ENCODE measurements at regions of chr7 and their contacts with region 1.

Region 1: DNA sequence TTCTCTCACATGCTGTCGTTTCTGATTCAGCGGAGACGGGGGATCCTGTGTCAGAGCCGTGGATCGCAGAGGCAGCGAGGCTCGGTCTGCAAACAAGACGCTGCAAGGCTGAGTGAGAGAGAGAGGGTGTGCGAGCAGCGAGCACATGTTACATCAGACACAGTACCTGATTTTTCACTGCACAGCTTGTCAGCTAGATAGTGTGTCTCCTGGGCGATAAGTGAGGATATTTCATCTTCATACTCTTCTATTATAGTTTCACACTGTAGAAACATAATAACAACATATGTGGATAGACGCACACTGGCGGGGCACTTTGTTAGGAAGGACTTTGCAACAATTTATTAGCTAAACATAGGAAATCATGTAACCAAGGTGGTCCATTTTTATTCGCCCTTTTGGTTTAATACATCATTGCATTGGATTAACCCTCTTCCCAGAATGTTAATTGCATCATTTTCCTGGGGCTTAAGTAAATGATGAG is 39.5 kb downstream of the CNPY1 start:
- DNase-seq: peak; percentile 45
- ATAC-seq: no peak
- H3K4me3 Mint-ChIP-seq: no peak overlapping the region
- H3K27ac Mint-ChIP-seq: no peak overlapping the region
- H3K4me1 Mint-ChIP-seq: peaks cover 19% of the 10 kb centered on the region
- H3K27me3 Mint-ChIP-seq: peaks cover 75% of the 10 kb centered on the region
- CTCF ChIP-seq: no peak

Region 2: DNA sequence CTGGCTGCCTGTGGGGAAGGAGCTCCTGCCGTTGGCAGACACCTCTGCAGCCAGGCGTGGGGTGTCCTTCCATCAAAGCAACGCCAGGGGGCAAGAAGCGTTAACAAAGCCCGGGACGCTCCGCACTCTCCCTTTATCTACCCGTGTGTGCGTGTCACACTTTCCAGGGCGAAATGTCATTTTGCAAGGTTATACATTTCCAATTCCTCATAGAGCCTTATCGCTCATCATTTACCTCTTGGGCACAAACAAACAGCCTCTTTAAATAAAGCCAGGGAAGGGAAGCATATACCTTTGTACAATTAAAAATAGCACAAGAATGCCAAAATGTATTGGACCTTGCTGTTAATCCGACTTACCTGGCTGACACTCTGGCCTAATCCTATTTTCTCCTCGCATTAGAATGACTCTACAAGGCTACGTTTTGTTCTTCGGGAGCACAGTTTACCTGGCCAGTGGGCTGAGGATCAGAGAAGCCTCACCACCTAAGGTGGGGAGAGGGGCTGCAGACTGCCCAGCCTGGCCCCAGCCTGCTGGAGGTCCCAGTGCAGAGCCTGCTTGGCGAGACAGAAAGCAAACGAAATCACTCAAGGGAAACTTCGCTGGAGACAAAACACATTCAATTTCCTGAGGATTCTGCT is 126.6 kb before region 1 on chr7:
- CTCF ChIA-PET with region 1: interaction called, 4 read pairs
- POLR2A ChIA-PET with region 1: no interaction called
- intact Hi-C with region 1: loop called (anchors 2 kb)
- DNase-seq: peak; percentile 87
- ATAC-seq: peak; percentile 96
- H3K4me3 Mint-ChIP-seq: no peak overlapping the region
- H3K27ac Mint-ChIP-seq: no peak overlapping the region
- H3K4me1 Mint-ChIP-seq: peaks cover 24% of the 10 kb centered on the region
- H3K27me3 Mint-ChIP-seq: peaks cover 83% of the 10 kb centered on the region
- CTCF ChIP-seq: peak; percentile 85

Region 3: DNA sequence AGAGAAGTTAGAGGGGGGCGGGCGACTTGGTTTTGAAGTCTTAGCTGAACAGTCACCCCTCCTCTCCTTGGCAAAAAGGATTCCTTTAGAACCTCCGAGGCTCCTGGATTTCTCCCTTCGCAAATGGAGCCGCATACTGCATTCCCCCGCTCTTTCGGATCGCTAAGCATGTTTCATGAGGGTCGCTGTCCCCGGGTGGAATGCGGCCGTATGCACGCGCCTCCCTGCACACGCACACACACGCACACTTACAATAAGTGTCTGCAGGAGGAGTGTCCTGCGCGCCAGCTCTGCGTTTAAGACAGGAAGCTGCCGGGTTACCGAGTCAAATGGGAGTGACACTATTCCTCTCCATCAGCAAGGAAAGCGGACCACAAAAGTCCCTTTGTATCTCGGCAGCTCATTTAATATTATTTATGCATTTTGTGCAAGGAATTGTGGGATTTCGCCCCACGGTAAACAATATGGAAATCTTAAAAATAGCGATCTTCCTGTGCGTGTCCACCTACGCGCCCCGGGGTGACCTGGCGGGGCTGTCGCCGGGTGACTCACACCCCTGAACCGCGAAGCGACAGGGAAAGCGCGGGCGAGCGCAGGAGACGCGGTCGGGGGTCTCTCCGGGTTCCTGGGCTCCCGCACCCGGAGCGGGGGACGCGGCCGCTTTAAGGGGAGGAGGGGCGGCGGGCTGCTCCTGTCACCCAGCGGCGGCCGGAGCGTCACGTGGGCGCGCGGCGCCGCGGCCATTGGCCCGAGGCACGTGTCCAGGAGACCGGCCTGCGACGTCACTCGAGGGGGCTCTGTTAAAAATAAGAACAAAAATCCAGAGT is 49.9 kb before region 1 on chr7:
- CTCF ChIA-PET with region 1: no interaction called
- POLR2A ChIA-PET with region 1: interaction called, 3 read pairs
- intact Hi-C with region 1: loop called (anchors 5 kb)
- DNase-seq: peak; percentile 63
- ATAC-seq: peak; percentile 34
- H3K4me3 Mint-ChIP-seq: peak overlapping the region; percentile 44
- H3K27ac Mint-ChIP-seq: no peak overlapping the region
- H3K4me1 Mint-ChIP-seq: peaks cover 5% of the 10 kb centered on the region
- H3K27me3 Mint-ChIP-seq: peaks cover 74% of the 10 kb centered on the region
- CTCF ChIP-seq: no peak

Region 4: DNA sequence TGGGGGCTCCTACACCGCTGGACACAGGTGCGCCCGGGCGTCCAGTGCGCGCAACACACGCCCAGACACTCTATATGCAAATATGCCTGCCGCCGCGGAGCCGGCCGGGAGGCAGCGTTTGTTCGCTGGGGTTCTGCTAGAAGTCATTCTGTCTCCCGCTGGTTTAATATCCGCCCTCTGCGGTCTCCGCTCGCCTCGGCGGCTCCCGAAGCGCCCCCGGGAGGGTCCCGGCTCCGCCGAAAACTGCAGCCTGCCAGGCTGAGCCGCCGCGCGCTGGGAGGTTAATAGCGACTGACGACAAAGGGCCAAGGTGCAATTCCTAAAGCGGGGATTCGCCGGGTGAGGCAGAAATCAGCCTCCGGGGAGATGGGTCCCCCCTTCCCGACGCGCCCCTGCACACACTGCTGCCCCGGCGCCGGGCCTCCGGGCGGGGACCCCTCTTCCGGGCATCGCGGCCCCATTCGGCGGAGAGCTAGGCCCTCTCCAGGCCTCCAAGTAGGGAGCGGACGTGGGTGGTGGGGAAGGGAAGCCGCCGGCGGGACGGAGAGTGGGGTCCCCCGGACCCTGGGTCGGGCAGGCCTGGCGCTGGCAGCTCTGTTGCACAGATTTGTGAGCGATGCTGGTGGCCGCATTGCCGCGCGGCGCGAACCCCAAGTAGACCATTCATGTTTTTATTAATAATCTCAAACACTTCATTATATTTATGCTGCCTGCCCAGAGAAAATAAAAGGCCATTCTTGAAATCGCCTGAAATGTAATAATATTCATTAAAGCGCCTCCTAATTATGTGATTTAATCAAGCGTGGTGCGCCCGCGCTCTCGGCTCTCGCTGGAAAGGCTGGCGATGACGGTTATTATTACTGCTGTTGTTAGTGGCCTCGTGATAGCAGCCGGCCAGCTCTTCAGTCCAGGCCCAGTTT is 39.8 kb before region 1 on chr7:
- CTCF ChIA-PET with region 1: no interaction called
- POLR2A ChIA-PET with region 1: no interaction called
- intact Hi-C with region 1: loop called (anchors 5 kb)
- DNase-seq: peak; percentile 77
- ATAC-seq: peak; percentile 85
- H3K4me3 Mint-ChIP-seq: no peak overlapping the region
- H3K27ac Mint-ChIP-seq: no peak overlapping the region
- H3K4me1 Mint-ChIP-seq: peaks cover 17% of the 10 kb centered on the region
- H3K27me3 Mint-ChIP-seq: peaks cover 83% of the 10 kb centered on the region
- CTCF ChIP-seq: no peak

Region 5: DNA sequence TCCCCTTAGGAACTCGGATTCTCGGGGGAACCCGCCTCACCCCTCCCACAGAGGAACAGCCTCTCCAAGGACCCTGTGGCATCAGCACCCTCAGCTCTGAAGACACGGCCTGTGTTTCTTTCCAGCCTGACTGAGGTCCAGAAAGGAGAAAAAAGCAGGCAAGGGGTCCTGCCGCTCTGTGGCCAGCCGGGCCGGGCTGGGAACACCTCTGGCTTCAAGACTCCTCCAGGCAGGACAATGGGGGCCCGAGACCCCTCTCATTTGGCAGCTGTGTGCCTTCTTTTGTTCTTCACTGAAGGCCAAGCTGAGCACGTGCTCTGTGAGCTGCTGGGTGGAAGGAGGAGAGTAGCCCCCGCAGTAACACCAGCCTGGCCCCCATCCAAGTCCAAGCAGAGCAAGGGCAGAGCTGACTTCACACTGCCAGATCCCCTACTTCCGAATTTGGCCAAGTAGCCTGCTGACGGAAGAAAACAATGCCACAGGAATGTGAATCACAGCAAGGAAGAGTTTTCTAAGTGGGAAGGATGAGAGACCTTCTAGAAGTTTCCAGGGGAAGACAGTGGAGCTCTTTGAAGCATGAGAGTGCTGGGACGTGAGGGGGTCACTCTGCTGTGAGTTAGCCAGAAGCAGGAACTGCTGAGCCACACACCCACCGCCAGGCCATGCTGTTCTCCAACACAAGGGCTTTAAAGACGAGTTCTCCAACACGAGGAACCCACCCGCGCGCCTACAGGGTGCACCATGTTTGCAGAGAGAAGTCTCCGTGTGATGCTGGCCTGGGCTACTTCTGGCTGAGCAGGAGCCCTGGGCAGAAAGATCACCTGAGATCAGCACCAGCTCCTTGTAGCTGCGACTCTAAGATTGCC is 36.3 kb after region 1 on chr7:
- CTCF ChIA-PET with region 1: no interaction called
- POLR2A ChIA-PET with region 1: no interaction called
- intact Hi-C with region 1: no loop called
- DNase-seq: no peak
- ATAC-seq: no peak
- H3K4me3 Mint-ChIP-seq: no peak overlapping the region
- H3K27ac Mint-ChIP-seq: no peak overlapping the region
- H3K4me1 Mint-ChIP-seq: no peaks in the 10 kb centered on the region
- H3K27me3 Mint-ChIP-seq: peaks cover 10% of the 10 kb centered on the region
- CTCF ChIP-seq: no peak

Region 6: DNA sequence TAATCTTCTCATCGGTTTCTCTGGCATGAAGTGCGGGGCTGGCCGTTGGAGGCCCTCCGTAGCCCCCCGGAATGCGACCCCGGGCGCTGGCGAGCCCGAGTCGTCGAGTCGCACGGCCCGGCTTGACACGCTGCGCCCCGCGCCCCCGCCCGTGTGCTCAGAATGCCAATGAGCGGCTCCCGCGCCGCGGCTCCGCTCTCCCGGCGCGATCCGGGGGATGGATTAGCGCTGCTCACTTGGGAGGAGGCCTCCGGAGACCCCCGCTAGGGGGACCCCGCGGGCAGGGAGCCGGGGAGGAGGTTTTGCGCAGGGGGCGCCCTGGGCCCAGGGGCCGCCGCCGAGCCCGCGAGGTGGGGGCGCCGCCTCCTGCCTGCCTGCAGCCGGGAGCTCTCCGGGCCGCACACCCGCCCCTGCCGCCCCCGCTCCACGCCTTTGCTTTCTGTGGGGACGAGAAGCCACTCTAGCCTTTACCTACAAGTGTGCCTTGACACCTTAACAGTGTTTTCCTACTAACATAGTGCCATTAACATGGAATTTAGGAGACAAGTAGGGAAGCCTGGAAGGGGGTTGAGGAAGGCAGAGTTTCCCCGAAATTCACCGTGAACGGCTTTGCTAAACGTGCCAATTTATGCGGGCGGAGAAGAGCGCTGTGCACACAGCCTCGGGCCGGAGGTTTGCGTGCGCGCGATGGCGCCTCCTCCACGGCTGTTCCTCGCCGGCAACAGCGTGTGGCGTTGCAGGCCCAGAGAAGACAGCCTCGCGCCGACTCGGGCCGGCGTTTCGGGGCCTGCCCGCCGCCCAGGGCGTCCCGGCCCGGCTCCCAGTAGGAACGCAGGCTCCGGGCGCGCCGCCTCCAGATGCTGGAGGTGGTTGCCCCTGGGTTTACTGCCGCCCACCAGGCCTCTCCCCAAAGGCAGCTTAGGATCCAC is 298.3 kb after region 1 on chr7:
- CTCF ChIA-PET with region 1: no interaction called
- POLR2A ChIA-PET with region 1: no interaction called
- intact Hi-C with region 1: loop called (anchors 10 kb)
- DNase-seq: peak; percentile 66
- ATAC-seq: peak; percentile 80
- H3K4me3 Mint-ChIP-seq: peak overlapping the region; percentile 58
- H3K27ac Mint-ChIP-seq: no peak overlapping the region
- H3K4me1 Mint-ChIP-seq: peaks cover 24% of the 10 kb centered on the region
- H3K27me3 Mint-ChIP-seq: peaks cover 57% of the 10 kb centered on the region
- CTCF ChIP-seq: peak; percentile 64

Region 7: DNA sequence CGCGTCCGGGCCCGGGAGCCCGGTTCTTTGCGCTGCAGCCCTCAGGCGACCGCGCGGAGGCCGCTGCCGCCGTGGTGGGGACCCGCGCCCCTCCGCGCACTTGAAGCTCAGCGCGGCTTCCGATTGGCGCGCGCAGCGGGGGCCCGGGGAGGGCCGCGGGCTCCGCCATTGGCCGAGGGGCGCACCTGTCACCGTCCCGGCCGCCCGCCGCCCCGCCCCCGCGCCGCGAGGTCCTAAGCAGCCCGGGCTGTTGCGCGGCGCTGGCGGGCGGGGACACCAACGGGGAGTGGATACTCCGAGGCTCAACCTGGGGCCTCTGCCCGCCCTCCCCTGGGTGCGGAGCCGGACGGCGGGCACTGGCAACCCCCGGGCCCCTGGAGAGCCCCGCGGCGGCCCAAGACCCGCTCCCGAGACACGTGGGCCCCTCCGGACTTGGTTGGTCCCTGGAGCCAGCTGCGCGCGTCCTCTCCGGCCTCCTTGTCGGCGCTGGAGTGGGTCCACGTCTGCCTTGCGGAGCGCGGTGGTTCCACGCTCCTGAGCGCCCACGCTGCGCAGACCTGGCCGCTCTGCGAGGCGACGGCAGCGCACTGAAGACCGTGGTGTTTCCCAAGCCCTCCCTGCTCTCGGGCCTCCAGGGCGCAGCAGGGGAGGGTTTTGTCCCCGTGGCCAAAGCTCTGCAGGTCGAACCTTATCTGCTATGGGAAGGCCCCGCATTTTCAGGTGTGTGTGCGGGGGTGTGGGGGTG is 1503.9 kb after region 1 on chr7 and contains the start of gene MNX1:
- CTCF ChIA-PET with region 1: no interaction called
- POLR2A ChIA-PET with region 1: no interaction called
- intact Hi-C with region 1: loop called (anchors 10 kb)
- DNase-seq: peak; percentile 63
- ATAC-seq: peak; percentile 79
- H3K4me3 Mint-ChIP-seq: peak within 1 kb of the TSS; percentile 19
- H3K27ac Mint-ChIP-seq: no peak within 1 kb of the TSS
- H3K4me1 Mint-ChIP-seq: peaks cover 9% of the 10 kb centered on the region
- H3K27me3 Mint-ChIP-seq: peaks cover 77% of the 10 kb centered on the region
- CTCF ChIP-seq: no peak
- total RNA-seq, gene MNX1: not detected